PC-9 (cell line): ENCODE measurements at regions of chr15 and their contacts with region 1.

Region 1: GRCh38 chr15:79896637-79897379 is at the start of gene MTHFS:
- DNase-seq: peak; percentile 66 to 84
- H3K4me3 ChIP-seq: peak within 1 kb of the TSS; percentile 70
- H3K27ac ChIP-seq: peak within 1 kb of the TSS; percentile 79
- H3K4me1 ChIP-seq: peaks cover 39% of the 10 kb centered on the region
- H3K27me3 ChIP-seq: no peaks in the 10 kb centered on the region
- CTCF ChIP-seq: peak; percentile 64
- total RNA-seq, gene MTHFS: 27.1 and 33.6 TPM in 2 replicates

Region 2: GRCh38 chr15:79923515-79924395 is 26.9 kb after region 1 on chr15:
- CTCF ChIA-PET with region 1: no interaction called
- POLR2A ChIA-PET with region 1: interaction called, 6 read pairs
- intact Hi-C with region 1: loop called (anchors 1 kb)
- DNase-seq: peak; percentile 91 to 99
- H3K4me3 ChIP-seq: peak overlapping the region; percentile 75
- H3K27ac ChIP-seq: peak overlapping the region; percentile 77
- H3K4me1 ChIP-seq: 0 out of 2 replicates have a peak, but pooled peaks cover 8% of the 10 kb centered on the region
- H3K27me3 ChIP-seq: no peaks in the 10 kb centered on the region
- CTCF ChIP-seq: no peak

Region 3: GRCh38 chr15:79965846-79966630 is 69.2 kb after region 1 on chr15:
- CTCF ChIA-PET with region 1: no interaction called
- POLR2A ChIA-PET with region 1: no interaction called
- intact Hi-C with region 1: no loop called
- DNase-seq: no peak
- H3K4me3 ChIP-seq: no peak overlapping the region
- H3K27ac ChIP-seq: no peak overlapping the region
- H3K4me1 ChIP-seq: no peaks in the 10 kb centered on the region
- H3K27me3 ChIP-seq: no peaks in the 10 kb centered on the region
- CTCF ChIP-seq: no peak

Region 4: DNA sequence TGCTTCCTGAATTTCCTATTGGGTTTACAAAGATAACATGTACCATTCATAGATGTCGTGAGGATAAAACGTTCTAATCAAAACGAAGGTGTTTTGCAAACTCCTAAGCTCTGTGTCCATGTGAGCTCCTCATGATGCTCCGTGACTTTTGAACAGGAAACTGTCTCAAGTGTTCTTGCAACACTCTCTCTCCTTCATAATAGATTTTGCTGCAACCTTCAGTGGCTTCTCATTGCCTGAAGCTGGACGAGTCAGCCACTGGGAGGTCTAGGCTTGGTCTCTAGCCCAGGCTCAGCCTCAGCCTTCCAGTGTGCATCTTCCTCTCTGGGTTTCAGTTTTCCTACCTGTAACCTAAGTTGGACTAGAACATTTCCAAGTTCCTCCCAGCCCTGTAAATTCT is 92.9 kb after region 1 on chr15:
- CTCF ChIA-PET with region 1: no interaction called
- POLR2A ChIA-PET with region 1: no interaction called
- intact Hi-C with region 1: loop called (anchors 2 kb)
- DNase-seq: peak in 1 of 2 experiments; percentile 48
- H3K4me3 ChIP-seq: no peak overlapping the region
- H3K27ac ChIP-seq: no peak overlapping the region
- H3K4me1 ChIP-seq: peaks cover 20% of the 10 kb centered on the region
- H3K27me3 ChIP-seq: no peaks in the 10 kb centered on the region
- CTCF ChIP-seq: no peak